ENCODE measurements at regions of chr4 and their contacts with region 1.

Region 1: GRCh38 chr4:137722910-137723309 is 190.6 kb upstream of the PCDH18 start:
- DNase-seq: no peak
- H3K4me3 ChIP-seq: no peak overlapping the region
- H3K27ac ChIP-seq: no peak overlapping the region
- H3K4me1 ChIP-seq: no peaks in the 10 kb centered on the region
- H3K27me3 ChIP-seq: no peaks in the 10 kb centered on the region
- CTCF ChIP-seq: no peak

Region 2: GRCh38 chr4:137851435-137851834 is 128.5 kb after region 1 on chr4:
- CTCF ChIA-PET with region 1: no interaction called
- POLR2A ChIA-PET with region 1: interaction called, 15 read pairs
- intact Hi-C with region 1: no loop called
- DNase-seq: no peak
- H3K4me3 ChIP-seq: no peak overlapping the region
- H3K27ac ChIP-seq: no peak overlapping the region
- H3K4me1 ChIP-seq: no peaks in the 10 kb centered on the region
- H3K27me3 ChIP-seq: no peaks in the 10 kb centered on the region
- CTCF ChIP-seq: no peak